B cell (primary cell): ENCODE measurements at regions of chr16 and their contacts with region 1.

Region 1: DNA sequence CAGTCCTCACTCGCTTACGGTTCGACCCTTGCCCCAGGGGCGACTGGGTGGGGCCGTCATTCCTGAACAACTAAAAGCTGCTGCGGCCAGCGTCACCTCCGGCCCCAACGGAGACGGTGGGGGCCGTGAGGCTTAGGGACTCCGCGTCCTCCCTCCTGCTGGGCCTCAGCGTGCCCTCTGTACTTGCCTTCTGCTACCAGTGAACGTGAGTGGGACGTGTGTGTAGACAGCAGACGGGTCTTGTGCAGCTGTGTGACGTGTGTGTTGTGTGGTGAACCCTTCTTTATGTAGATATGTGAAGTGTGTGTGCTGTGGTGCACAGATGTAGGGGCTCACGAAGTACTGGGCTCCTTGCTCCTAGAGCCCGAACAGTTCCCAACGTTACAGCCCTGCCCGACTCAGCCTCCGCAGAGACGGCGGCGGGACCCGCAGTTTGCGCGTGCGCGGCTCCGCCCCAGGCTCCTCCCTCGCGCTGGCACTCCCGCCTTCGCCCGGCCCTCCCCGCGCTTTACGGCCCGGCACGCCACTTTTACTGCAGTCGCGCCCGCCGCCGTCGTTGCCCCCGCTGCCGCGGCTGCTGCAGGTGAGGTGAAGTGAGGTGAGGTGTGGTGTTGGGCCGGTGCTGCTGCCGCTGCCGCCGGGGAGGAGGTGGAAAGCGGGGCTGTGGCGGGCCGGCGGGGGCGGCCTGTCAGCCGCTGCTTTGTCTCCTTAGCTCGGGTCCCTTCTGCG is at the start of gene PHAF1:
- DNase-seq: peak; percentile 95
- ATAC-seq: peak; percentile 94
- H3K4me3 ChIP-seq: peak within 1 kb of the TSS; percentile 68 to 92 (median 84)
- H3K4me3 Mint-ChIP-seq: peak within 1 kb of the TSS; percentile 93
- H3K27ac ChIP-seq: peak within 1 kb of the TSS; percentile 22 to 70
- H3K27ac Mint-ChIP-seq: peak within 1 kb of the TSS; percentile 82
- H3K4me1 ChIP-seq: peaks cover 25 to 34% of the 10 kb centered on the region in 2 donors
- H3K4me1 Mint-ChIP-seq: peaks cover 37% of the 10 kb centered on the region
- H3K27me3 ChIP-seq: no peaks in the 10 kb centered on the region
- H3K27me3 Mint-ChIP-seq: no peaks in the 10 kb centered on the region
- CTCF ChIP-seq: no peak
- total RNA-seq, gene PHAF1: 20.7 and 23.0 TPM in 2 replicates

Region 2: DNA sequence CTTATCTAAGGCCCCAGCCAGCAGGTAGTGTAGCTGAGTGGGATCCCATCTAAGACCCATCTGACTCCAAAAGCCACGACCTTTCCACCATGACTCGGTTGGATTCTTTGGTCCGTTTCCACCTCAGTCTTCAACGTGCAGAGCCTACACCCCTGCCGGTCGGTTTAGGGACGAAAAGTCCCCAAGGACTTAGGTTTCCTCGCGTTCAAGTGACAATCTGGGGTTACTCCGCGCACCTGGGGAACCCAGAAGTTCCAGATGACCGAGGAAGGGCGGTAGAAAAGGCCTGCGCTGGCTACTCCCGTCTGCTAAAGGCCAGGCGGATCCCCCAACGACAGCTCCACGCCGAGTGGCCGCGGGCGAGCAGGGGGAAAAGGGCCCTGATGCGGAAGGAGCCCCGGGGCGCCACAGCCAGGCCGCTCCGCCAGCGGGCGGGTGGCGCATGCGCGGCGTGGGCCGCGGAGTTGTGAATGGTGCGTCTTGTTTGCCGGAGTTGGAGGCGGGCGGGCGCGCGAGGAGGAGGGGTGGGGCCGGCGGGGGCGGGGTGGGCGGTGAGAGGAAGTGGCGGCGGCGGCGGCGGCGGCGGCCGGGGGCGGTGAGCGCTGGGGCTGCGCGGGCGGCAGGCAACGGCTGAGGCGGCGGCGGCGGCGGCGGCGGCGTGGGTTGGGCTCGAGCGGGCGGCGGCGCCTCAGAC is 80.9 kb before region 1 on chr16 and contains the start of gene CBFB:
- CTCF ChIA-PET with region 1: no interaction called
- POLR2A ChIA-PET with region 1: no interaction called
- intact Hi-C with region 1: loop called (anchors 1 kb)
- DNase-seq: peak; percentile 97
- ATAC-seq: peak; percentile 83
- H3K4me3 ChIP-seq: peak within 1 kb of the TSS; percentile 69 to 82 (median 76)
- H3K4me3 Mint-ChIP-seq: peak within 1 kb of the TSS; percentile 94
- H3K27ac ChIP-seq: peak within 1 kb of the TSS; percentile 96 to 98
- H3K27ac Mint-ChIP-seq: peak within 1 kb of the TSS; percentile 94
- H3K4me1 ChIP-seq: peaks cover 13 to 18% of the 10 kb centered on the region in 2 donors
- H3K4me1 Mint-ChIP-seq: peaks cover 40% of the 10 kb centered on the region
- H3K27me3 ChIP-seq: no peaks in the 10 kb centered on the region
- H3K27me3 Mint-ChIP-seq: no peaks in the 10 kb centered on the region
- CTCF ChIP-seq: peak; percentile 21
- total RNA-seq, gene CBFB: 89.0 and 101 TPM in 2 replicates

Region 3: DNA sequence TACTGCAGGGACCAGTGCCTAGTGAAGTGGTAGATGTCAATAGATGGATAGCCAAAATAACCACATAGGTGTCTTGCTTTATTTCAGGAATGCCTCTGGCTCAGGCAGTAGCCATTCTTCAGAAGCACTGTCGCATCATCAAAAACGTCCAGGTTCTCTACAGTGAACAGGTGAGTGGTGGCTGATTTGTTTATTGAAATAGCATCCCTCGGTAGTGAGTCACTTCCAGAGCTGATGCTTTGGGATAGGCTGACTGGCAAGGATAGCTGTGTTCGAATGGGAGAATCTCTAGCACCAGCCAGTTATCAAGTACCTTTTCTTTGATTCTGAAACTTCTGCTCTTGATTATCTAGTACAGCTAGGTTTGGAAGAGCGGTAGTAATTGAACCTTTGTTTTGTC is 10.5 kb after region 1 on chr16:
- CTCF ChIA-PET with region 1: no interaction called
- POLR2A ChIA-PET with region 1: no interaction called
- intact Hi-C with region 1: no loop called
- DNase-seq: no peak
- ATAC-seq: no peak
- H3K4me3 ChIP-seq: no peak overlapping the region
- H3K4me3 Mint-ChIP-seq: no peak overlapping the region
- H3K27ac ChIP-seq: no peak overlapping the region
- H3K27ac Mint-ChIP-seq: no peak overlapping the region
- H3K4me1 ChIP-seq: no peaks in the 10 kb centered on the region
- H3K4me1 Mint-ChIP-seq: peaks cover 2% of the 10 kb centered on the region
- H3K27me3 ChIP-seq: no peaks in the 10 kb centered on the region
- H3K27me3 Mint-ChIP-seq: no peaks in the 10 kb centered on the region
- CTCF ChIP-seq: no peak

Region 4: GRCh38 chr16:67311607-67312488 is 202.3 kb after region 1 on chr16:
- CTCF ChIA-PET with region 1: no interaction called
- POLR2A ChIA-PET with region 1: no interaction called
- intact Hi-C with region 1: no loop called
- DNase-seq: no peak
- ATAC-seq: no peak
- H3K4me3 ChIP-seq: no peak overlapping the region
- H3K4me3 Mint-ChIP-seq: no peak overlapping the region
- H3K27ac ChIP-seq: no peak overlapping the region
- H3K27ac Mint-ChIP-seq: no peak overlapping the region
- H3K4me1 ChIP-seq: peaks cover 6 to 9% of the 10 kb centered on the region in 2 donors
- H3K4me1 Mint-ChIP-seq: peaks cover 5% of the 10 kb centered on the region
- H3K27me3 ChIP-seq: no peaks in the 10 kb centered on the region
- H3K27me3 Mint-ChIP-seq: peaks cover 6% of the 10 kb centered on the region
- CTCF ChIP-seq: no peak

Region 5: GRCh38 chr16:67499106-67499505 is 389.5 kb after region 1 on chr16:
- CTCF ChIA-PET with region 1: no interaction called
- POLR2A ChIA-PET with region 1: no interaction called
- intact Hi-C with region 1: no loop called
- DNase-seq: no peak
- ATAC-seq: no peak
- H3K4me3 ChIP-seq: no peak overlapping the region
- H3K4me3 Mint-ChIP-seq: no peak overlapping the region
- H3K27ac ChIP-seq: no peak overlapping the region
- H3K27ac Mint-ChIP-seq: peak overlapping the region; percentile 70
- H3K4me1 ChIP-seq: peaks cover 13 to 17% of the 10 kb centered on the region in 2 donors
- H3K4me1 Mint-ChIP-seq: peaks cover 29% of the 10 kb centered on the region
- H3K27me3 ChIP-seq: no peaks in the 10 kb centered on the region
- H3K27me3 Mint-ChIP-seq: no peaks in the 10 kb centered on the region
- CTCF ChIP-seq: no peak

Region 6: DNA sequence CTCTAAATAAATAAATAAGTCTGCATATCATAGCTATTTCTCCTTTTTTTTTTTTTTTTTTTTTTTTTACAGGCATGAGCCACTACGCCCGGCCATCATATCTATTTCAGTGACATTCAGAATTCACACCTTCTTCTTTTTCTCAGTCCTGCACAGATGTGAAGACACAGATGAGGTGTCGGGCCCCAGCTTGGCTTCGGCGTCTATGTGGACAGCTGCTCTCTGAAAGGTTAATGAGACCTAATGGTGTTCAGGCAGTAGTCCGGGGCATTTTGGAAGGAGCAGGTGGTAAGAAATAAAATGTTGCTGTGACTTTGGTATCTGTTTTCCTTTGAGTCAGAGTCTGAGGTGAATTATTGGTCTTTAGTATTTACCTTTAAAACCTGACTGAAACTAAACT is 1757.4 kb after region 1 on chr16:
- CTCF ChIA-PET with region 1: no interaction called
- POLR2A ChIA-PET with region 1: no interaction called
- intact Hi-C with region 1: no loop called
- DNase-seq: no peak
- ATAC-seq: no peak
- H3K4me3 ChIP-seq: no peak overlapping the region
- H3K4me3 Mint-ChIP-seq: no peak overlapping the region
- H3K27ac ChIP-seq: no peak overlapping the region
- H3K27ac Mint-ChIP-seq: no peak overlapping the region
- H3K4me1 ChIP-seq: peaks cover 0 to 5% of the 10 kb centered on the region in 2 donors
- H3K4me1 Mint-ChIP-seq: peaks cover 7% of the 10 kb centered on the region
- H3K27me3 ChIP-seq: no peaks in the 10 kb centered on the region
- H3K27me3 Mint-ChIP-seq: no peaks in the 10 kb centered on the region
- CTCF ChIP-seq: no peak